Panc1 (cell line): ENCODE measurements at regions of chr5 and their contacts with region 1.

Region 1: GRCh38 chr5:137142764-137143605 is 356.1 kb downstream of the SPOCK1 start:
- DNase-seq: peak; percentile 50
- ATAC-seq: peak; percentile 44; the same call in 1 of the 2 replicates
- H3K4me3 ChIP-seq: no peak overlapping the region
- H3K27ac ChIP-seq: no peak overlapping the region
- H3K4me1 ChIP-seq: no peaks in the 10 kb centered on the region
- H3K27me3 ChIP-seq: no peaks in the 10 kb centered on the region
- CTCF ChIP-seq: no peak

Region 2: GRCh38 chr5:136907371-136907770 is 235.6 kb before region 1 on chr5:
- CTCF ChIA-PET with region 1: no interaction called
- POLR2A ChIA-PET with region 1: no interaction called
- in situ Hi-C with region 1: no loop called
- intact Hi-C with region 1: no loop called
- DNase-seq: no peak
- ATAC-seq: no peak
- H3K4me3 ChIP-seq: no peak overlapping the region
- H3K27ac ChIP-seq: no peak overlapping the region
- H3K4me1 ChIP-seq: no peaks in the 10 kb centered on the region
- H3K27me3 ChIP-seq: no peaks in the 10 kb centered on the region; the same call in none of the 2 replicates
- CTCF ChIP-seq: no peak

Region 3: GRCh38 chr5:137071931-137072330 is 71.1 kb before region 1 on chr5:
- CTCF ChIA-PET with region 1: no interaction called
- POLR2A ChIA-PET with region 1: interaction called, 14 read pairs
- in situ Hi-C with region 1: no loop called
- intact Hi-C with region 1: no loop called
- DNase-seq: no peak
- ATAC-seq: no peak
- H3K4me3 ChIP-seq: no peak overlapping the region
- H3K27ac ChIP-seq: no peak overlapping the region
- H3K4me1 ChIP-seq: no peaks in the 10 kb centered on the region
- H3K27me3 ChIP-seq: peaks cover 3% of the 10 kb centered on the region
- CTCF ChIP-seq: no peak